ENCODE measurements at regions of chr20 and their contacts with region 1.

Region 1: GRCh38 chr20:55597526-55597925 is 407.8 kb downstream of the CBLN4 start:
- DNase-seq: no peak
- H3K4me3 ChIP-seq: no peak overlapping the region
- H3K27ac ChIP-seq: no peak overlapping the region
- H3K4me1 ChIP-seq: no peaks in the 10 kb centered on the region
- H3K27me3 ChIP-seq: no peaks in the 10 kb centered on the region
- CTCF ChIP-seq: no peak
- POLR2A ChIP-seq: no peak

Region 2: DNA sequence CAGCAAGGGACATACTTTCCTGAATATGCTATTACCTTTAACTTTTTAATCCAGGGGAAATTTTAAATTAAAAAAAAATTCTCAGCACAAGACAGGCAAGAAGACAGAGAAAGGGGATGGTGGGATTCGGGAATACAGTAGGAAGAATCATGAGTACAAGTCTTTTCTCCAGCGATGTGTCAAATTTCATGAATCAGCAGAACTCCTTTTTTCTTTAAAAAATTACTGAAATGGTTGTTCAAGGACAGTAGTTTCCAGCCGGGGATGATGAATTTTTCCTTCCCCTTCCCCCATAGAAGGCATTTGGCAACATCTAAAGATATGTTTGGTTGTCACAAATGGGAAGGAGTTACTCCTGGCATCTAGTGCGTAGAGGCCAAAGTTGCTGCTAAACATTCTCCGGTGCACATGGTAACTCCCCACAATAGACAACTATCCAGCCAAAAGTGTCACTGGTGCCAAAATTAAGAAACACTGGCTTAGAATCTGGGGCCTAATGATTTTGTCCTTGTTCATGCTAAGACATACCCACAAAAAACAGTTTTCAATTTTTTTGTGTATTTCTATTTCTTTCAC is 42.4 kb before region 1 on chr20:
- intact Hi-C with region 1: loop called (anchors 2 kb)
- DNase-seq: no peak
- H3K4me3 ChIP-seq: no peak overlapping the region
- H3K27ac ChIP-seq: no peak overlapping the region
- H3K4me1 ChIP-seq: no peaks in the 10 kb centered on the region
- H3K27me3 ChIP-seq: no peaks in the 10 kb centered on the region
- CTCF ChIP-seq: no peak
- POLR2A ChIP-seq: no peak

Measured in breast epithelium (tissue), 4 donors.